CD4-positive, alpha-beta memory T cell (primary cell): ENCODE measurements at regions of chr12 and their contacts with region 1.

Region 1: GRCh38 chr12:110563702-110564640 is 19.1 kb downstream of the PPTC7 start:
- DNase-seq: no peak
- H3K4me3 ChIP-seq: no peak overlapping the region
- H3K4me3 Mint-ChIP-seq: peak overlapping the region in 4 of 8 donors; percentile 7 to 40 (median 27)
- H3K27ac ChIP-seq: no peak overlapping the region
- H3K27ac Mint-ChIP-seq: peak overlapping the region; percentile 2 to 98 (median 88)
- H3K4me1 ChIP-seq: peaks cover 72% of the 10 kb centered on the region
- H3K4me1 Mint-ChIP-seq: peaks cover 46 to 80% (median 61%) of the 10 kb centered on the region in 4 donors
- H3K27me3 ChIP-seq: no peaks in the 10 kb centered on the region
- H3K27me3 Mint-ChIP-seq: no peaks in the 10 kb centered on the region

Region 2: GRCh38 chr12:109833307-109834189 is 730.4 kb before region 1 on chr12 and contains the start of gene TRPV4:
- CTCF ChIA-PET with region 1: no interaction called
- POLR2A ChIA-PET with region 1: no interaction called
- intact Hi-C with region 1: no loop called
- DNase-seq: no peak
- H3K4me3 ChIP-seq: no peak within 1 kb of the TSS
- H3K4me3 Mint-ChIP-seq: peak within 1 kb of the TSS in 6 of 8 donors; percentile 39 to 63 (median 53)
- H3K27ac ChIP-seq: no peak within 1 kb of the TSS
- H3K27ac Mint-ChIP-seq: no peak within 1 kb of the TSS
- H3K4me1 ChIP-seq: no peaks in the 10 kb centered on the region
- H3K4me1 Mint-ChIP-seq: peaks cover 2 to 5% (median 4%) of the 10 kb centered on the region in 4 donors
- H3K27me3 ChIP-seq: no peaks in the 10 kb centered on the region
- H3K27me3 Mint-ChIP-seq: peaks cover 4 to 20% of the 10 kb centered on the region in 2 donors
- total RNA-seq, gene TRPV4: 0.17 TPM in 1 of 2 experiments, not detected in the other

Region 3: DNA sequence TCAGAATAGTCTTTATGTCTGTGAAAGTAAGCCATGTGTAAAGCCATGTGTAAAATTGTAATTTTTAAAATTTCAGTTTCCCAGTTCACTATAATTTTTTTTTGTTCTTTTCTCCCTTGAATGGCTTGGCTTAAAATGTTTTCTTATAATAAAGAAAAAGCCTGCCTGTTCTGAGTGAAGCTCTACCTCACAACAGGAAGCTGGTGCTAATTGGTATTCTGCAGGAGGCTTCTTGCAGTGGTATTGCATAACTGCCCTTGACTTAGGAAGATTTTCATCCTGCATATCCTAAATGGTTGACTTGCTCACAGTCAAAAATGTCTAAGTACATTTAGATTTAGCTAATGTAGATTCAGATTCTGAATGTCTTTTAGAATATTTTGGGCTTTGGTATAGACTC is 233.4 kb before region 1 on chr12:
- CTCF ChIA-PET with region 1: no interaction called
- POLR2A ChIA-PET with region 1: no interaction called
- intact Hi-C with region 1: no loop called
- DNase-seq: no peak
- H3K4me3 ChIP-seq: no peak overlapping the region
- H3K4me3 Mint-ChIP-seq: no peak overlapping the region
- H3K27ac ChIP-seq: no peak overlapping the region
- H3K27ac Mint-ChIP-seq: peak overlapping the region in 1 of 7 donors; percentile 24
- H3K4me1 ChIP-seq: no peaks in the 10 kb centered on the region
- H3K4me1 Mint-ChIP-seq: peaks cover 0 to 9% (median 7%) of the 10 kb centered on the region in 4 donors
- H3K27me3 ChIP-seq: no peaks in the 10 kb centered on the region
- H3K27me3 Mint-ChIP-seq: no peaks in the 10 kb centered on the region

Region 4: GRCh38 chr12:110403146-110403975 is 160.6 kb before region 1 on chr12 and contains the start of gene ANAPC7:
- CTCF ChIA-PET with region 1: no interaction called
- POLR2A ChIA-PET with region 1: no interaction called
- intact Hi-C with region 1: no loop called
- DNase-seq: peak; percentile 88 to 90 (median 89)
- H3K4me3 ChIP-seq: peak within 1 kb of the TSS; percentile 80 to 93
- H3K4me3 Mint-ChIP-seq: peak within 1 kb of the TSS; percentile 98 to 100 (median 100)
- H3K27ac ChIP-seq: peak within 1 kb of the TSS; percentile 82
- H3K27ac Mint-ChIP-seq: peak within 1 kb of the TSS in 6 of 7 donors; percentile 98 to 99 (median 99)
- H3K4me1 ChIP-seq: peaks cover 32% of the 10 kb centered on the region
- H3K4me1 Mint-ChIP-seq: peaks cover 18 to 44% (median 30%) of the 10 kb centered on the region in 4 donors
- H3K27me3 ChIP-seq: no peaks in the 10 kb centered on the region
- H3K27me3 Mint-ChIP-seq: no peaks in the 10 kb centered on the region
- total RNA-seq, gene ANAPC7: 69.9 to 70.1 TPM

Region 5: DNA sequence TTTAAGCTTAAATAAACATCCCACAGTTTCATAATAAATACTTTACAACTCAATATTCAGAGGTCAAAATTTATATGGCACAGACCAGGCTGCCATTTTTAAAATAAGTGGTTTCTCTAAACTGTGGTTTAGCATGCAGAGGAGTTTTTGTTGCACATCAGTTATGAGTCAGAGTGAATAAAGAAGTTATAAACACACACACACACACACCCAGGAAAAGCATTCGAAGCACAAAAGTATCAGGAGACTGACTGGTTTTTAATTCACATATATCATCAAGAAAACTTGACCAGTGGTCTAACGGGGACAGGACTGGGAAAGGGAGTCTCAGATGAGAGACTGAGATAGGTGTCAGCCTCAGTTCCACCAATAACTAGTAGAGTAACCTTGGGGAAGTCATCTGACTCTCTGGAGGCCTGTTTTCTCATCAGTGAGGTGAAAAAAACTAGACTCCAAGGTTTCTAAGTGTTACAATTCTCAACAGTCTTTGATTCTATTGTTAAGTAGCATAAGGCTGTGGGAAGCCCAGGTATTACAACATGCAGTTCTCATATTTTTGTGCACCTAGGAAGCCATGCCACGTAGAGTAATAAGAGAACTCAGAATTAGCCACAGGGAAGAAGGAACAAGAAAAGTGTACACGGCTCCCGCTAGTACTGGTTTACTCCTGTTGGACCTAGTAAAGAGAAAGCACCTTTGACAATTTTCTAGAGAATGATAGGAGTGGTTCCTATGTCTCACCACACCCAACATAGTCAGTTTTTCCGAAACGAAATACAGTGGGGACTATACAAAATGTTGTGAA is 13.9 kb after region 1 on chr12:
- CTCF ChIA-PET with region 1: interaction called, 9 read pairs
- POLR2A ChIA-PET with region 1: interaction called, 12 read pairs
- intact Hi-C with region 1: loop called (anchors 1 kb)
- DNase-seq: peak in 4 of 5 donors; percentile 36 to 86 (median 38)
- H3K4me3 ChIP-seq: peak overlapping the region; percentile 2 to 25
- H3K4me3 Mint-ChIP-seq: peak overlapping the region; percentile 58 to 97 (median 78)
- H3K27ac ChIP-seq: peak overlapping the region; percentile 66
- H3K27ac Mint-ChIP-seq: peak overlapping the region; percentile 69 to 96 (median 92)
- H3K4me1 ChIP-seq: peaks cover 80% of the 10 kb centered on the region
- H3K4me1 Mint-ChIP-seq: peaks cover 50 to 82% (median 68%) of the 10 kb centered on the region in 4 donors
- H3K27me3 ChIP-seq: no peaks in the 10 kb centered on the region
- H3K27me3 Mint-ChIP-seq: no peaks in the 10 kb centered on the region

Region 6: GRCh38 chr12:110583137-110584059 is 19.4 kb after region 1 on chr12 and contains the start of gene PPTC7:
- CTCF ChIA-PET with region 1: interaction called, 12 read pairs
- POLR2A ChIA-PET with region 1: interaction called, 8 read pairs
- intact Hi-C with region 1: loop called (anchors 1 kb)
- DNase-seq: peak; percentile 91 to 97 (median 94)
- H3K4me3 ChIP-seq: peak within 1 kb of the TSS; percentile 77 to 84
- H3K4me3 Mint-ChIP-seq: peak within 1 kb of the TSS; percentile 89 to 98 (median 96)
- H3K27ac ChIP-seq: peak within 1 kb of the TSS; percentile 93
- H3K27ac Mint-ChIP-seq: peak within 1 kb of the TSS; percentile 94 to 97 (median 96)
- H3K4me1 ChIP-seq: peaks cover 62% of the 10 kb centered on the region
- H3K4me1 Mint-ChIP-seq: peaks cover 47 to 73% (median 61%) of the 10 kb centered on the region in 4 donors
- H3K27me3 ChIP-seq: no peaks in the 10 kb centered on the region
- H3K27me3 Mint-ChIP-seq: no peaks in the 10 kb centered on the region
- total RNA-seq, gene PPTC7: 32.6 to 35.6 TPM